ENCODE measurements at regions of chr19 and their contacts with region 1.

Region 1: GRCh38 chr19:12974301-12975220 is 5.2 kb downstream of the DAND5 start:
- DNase-seq: no peak
- ATAC-seq: no peak

Region 2: DNA sequence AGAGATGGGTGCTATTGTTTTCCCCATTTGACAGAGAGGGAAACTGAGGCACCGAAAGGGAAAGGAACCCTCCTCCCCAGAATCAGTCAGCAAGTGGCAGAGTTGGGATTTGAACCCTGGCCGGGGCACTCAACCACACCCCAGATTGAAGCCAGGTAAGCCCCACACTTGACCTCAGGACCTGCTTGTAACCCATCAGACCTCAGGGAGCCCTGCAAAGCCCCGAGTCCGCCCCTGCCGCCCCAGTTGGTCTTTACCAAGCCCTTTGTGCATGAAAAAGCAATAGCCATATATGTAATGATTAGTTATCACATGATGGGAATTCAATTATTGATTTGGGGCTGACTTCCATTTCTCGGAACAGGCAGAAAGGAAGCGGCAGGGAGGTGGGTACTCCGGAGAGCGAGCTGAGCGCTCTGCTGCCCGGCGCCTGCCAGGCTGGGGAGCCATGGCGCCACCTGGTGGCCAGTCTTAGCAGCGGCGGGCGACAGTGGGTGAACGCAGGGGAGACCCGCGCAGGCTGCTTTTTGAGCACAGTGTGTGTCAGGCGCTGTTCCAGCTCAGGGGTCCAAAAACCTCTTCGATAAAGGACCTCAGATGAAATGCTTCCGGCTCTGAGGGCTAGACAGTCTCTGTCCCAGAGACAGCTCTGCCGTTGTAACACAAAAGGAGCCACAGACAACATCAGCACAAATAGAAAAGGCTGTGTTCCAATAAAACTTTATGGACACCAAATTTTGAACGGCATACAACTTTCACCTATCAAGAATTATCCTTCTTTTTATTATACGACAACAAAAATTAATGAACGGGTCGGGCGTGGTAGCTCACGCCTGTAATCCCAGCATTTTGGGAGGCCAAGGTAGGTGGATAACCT is 614.6 kb after region 1 on chr19:
- intact Hi-C with region 1: loop called in 1 of 2 experiments (anchors 10 kb)
- DNase-seq: peak; percentile 71
- ATAC-seq: peak; percentile 82 to 83

Measured in left cardiac atrium (tissue), 4 donors.